Endothelial cell of umbilical vein (primary cell): ENCODE measurements at regions of chr12 and their contacts with region 1.

Region 1: DNA sequence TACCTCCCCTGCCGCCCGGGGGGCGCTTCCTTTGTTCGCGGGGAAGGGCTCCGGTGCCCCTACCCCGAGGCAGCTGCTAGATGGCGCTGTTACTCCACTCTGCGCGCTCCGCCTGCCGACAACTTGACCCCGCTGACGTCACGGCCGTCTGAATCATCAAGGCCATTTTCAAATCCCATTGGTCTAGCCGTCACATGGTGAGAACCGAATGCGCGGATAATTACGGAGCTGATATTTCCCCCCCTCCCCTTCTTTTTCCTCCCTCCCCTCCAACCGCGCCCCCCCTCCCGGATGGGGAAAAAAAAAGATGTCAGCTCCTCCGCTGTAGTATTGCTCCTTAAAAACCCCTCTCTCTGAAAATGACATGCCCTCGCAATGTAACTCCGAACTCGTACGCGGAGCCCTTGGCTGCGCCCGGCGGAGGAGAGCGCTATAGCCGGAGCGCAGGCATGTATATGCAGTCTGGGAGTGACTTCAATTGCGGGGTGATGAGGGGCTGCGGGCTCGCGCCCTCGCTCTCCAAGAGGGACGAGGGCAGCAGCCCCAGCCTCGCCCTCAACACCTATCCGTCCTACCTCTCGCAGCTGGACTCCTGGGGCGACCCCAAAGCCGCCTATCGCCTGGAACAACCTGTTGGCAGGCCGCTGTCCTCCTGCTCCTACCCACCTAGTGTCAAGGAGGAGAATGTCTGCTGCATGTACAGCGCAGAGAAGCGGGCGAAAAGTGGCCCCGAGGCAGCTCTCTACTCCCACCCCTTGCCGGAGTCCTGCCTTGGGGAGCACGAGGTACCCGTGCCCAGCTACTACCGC is at the start of gene HOXC10:
- DNase-seq: peak; percentile 71
- H3K4me3 ChIP-seq: no peak within 1 kb of the TSS
- H3K27ac ChIP-seq: no peak within 1 kb of the TSS
- H3K4me1 ChIP-seq: no peaks in the 10 kb centered on the region
- H3K27me3 ChIP-seq: peaks cover 89 to 93% of the 10 kb centered on the region in 2 experiments
- CTCF ChIP-seq: peak; percentile 47 to 72
- POLR2A ChIP-seq: no peak
- total RNA-seq, gene HOXC10: 0.44 TPM in 1 of 2 replicates, not detected in the other

Region 2: GRCh38 chr12:53701518-53702260 is 283.4 kb before region 1 on chr12:
- CTCF ChIA-PET with region 1: no interaction called
- POLR2A ChIA-PET with region 1: no interaction called
- dilution Hi-C with region 1: no loop called
- intact Hi-C with region 1: loop called (anchors 5 kb)
- DNase-seq: peak; percentile 69
- H3K4me3 ChIP-seq: no peak overlapping the region
- H3K27ac ChIP-seq: no peak overlapping the region
- H3K4me1 ChIP-seq: no peaks in the 10 kb centered on the region
- H3K27me3 ChIP-seq: peaks cover 57 to 72% of the 10 kb centered on the region in 2 experiments
- CTCF ChIP-seq: peak; percentile 95 to 96
- POLR2A ChIP-seq: no peak

Region 3: GRCh38 chr12:53791735-53792326 is 193.3 kb before region 1 on chr12:
- CTCF ChIA-PET with region 1: no interaction called
- POLR2A ChIA-PET with region 1: no interaction called
- dilution Hi-C with region 1: no loop called
- intact Hi-C with region 1: loop called (anchors 2 kb)
- DNase-seq: no peak
- H3K4me3 ChIP-seq: no peak overlapping the region
- H3K27ac ChIP-seq: no peak overlapping the region
- H3K4me1 ChIP-seq: no peaks in the 10 kb centered on the region
- H3K27me3 ChIP-seq: peaks cover 22 to 28% of the 10 kb centered on the region in 2 experiments
- CTCF ChIP-seq: peak; percentile 28 to 34
- POLR2A ChIP-seq: no peak

Region 4: GRCh38 chr12:54040148-54040494 is 55.0 kb after region 1 on chr12:
- CTCF ChIA-PET with region 1: no interaction called
- POLR2A ChIA-PET with region 1: no interaction called
- dilution Hi-C with region 1: no loop called
- intact Hi-C with region 1: no loop called
- DNase-seq: no peak
- H3K4me3 ChIP-seq: no peak overlapping the region
- H3K27ac ChIP-seq: no peak overlapping the region
- H3K4me1 ChIP-seq: no peaks in the 10 kb centered on the region
- H3K27me3 ChIP-seq: peaks cover 72 to 79% of the 10 kb centered on the region in 2 experiments
- CTCF ChIP-seq: no peak
- POLR2A ChIP-seq: no peak

Region 5: DNA sequence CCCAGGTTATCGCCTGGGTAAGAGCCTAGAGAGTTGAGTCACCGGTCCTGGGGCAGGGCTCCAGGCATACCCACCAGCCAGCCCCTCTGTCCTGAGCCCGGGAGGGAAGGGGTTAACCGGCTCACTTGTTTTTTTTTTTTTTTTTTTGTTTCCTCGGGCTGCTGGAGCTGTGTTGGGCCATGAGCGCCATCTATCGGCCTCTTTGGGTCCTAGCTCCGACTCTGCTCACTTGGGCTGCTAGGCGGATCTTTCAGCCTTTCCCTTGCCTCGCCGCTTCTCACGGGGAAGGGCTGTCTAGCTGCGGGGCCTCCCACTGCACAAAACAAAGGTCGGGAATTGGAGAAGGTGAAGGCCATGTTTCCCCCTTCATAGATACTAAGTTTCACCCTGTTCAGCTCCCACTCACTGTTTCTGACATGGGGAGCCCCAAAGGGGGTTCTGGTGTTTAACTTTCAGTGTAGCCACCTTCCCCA is 206.5 kb after region 1 on chr12:
- CTCF ChIA-PET with region 1: interaction called, 12 read pairs
- POLR2A ChIA-PET with region 1: no interaction called
- dilution Hi-C with region 1: no loop called
- intact Hi-C with region 1: no loop called
- DNase-seq: peak; percentile 75
- H3K4me3 ChIP-seq: no peak overlapping the region
- H3K27ac ChIP-seq: no peak overlapping the region
- H3K4me1 ChIP-seq: no peaks in the 10 kb centered on the region
- H3K27me3 ChIP-seq: peaks cover 30 to 33% of the 10 kb centered on the region in 2 experiments
- CTCF ChIP-seq: peak; percentile 75 to 94
- POLR2A ChIP-seq: no peak

Region 6: DNA sequence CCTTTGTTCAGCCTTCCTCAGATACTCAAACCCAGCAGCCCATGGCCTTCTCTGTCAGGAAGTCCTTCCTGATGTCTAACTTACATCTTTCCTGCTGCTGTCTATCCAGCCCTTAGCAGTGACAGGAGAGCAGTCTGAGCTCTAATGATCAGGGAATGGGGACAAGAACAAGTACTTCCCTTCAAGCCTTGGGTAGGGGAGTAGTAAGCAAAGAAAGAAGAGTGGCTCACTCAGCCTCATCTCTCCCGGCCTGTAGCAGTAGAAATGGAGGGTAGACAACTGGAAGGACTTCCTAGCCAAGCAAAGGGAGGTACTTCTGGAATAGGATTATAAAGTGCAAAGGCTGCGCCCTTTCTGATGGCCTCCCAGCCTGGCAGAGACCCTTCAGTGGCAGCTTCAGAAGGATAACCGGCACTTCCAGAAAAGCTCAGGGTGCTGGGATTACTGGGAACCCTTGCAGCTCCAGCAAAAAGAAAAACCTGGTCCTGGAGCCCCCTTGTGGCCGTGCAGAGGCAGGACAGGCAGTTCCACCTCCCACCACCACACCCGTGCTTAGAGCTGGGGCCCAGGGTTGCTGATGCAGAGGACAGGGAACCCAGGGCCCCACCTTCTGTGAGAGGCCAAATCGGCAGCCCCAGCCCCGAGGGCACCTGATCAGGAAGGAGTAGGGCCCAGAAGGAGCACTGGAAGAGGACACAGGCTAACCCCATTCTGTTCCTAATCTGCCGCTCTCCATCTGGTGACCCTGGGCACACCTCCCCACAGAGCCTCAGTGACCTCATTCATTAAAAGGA is 216.1 kb after region 1 on chr12:
- CTCF ChIA-PET with region 1: interaction called, 44 read pairs
- POLR2A ChIA-PET with region 1: no interaction called
- dilution Hi-C with region 1: no loop called
- intact Hi-C with region 1: loop called (anchors 1 kb)
- DNase-seq: peak; percentile 52
- H3K4me3 ChIP-seq: no peak overlapping the region
- H3K27ac ChIP-seq: no peak overlapping the region
- H3K4me1 ChIP-seq: no peaks in the 10 kb centered on the region
- H3K27me3 ChIP-seq: peaks cover 22 to 37% of the 10 kb centered on the region in 2 experiments
- CTCF ChIP-seq: peak; percentile 86 to 99
- POLR2A ChIP-seq: no peak